ENCODE measurements at regions of chr9 and their contacts with region 1.

Region 1: GRCh38 chr9:70924895-70925547 is 196.4 kb downstream of the TRPM3 start:
- DNase-seq: peak; percentile 47
- H3K4me3 ChIP-seq: no peak overlapping the region
- H3K27ac ChIP-seq: no peak overlapping the region
- H3K27me3 ChIP-seq: no peaks in the 10 kb centered on the region
- CTCF ChIP-seq: peak; percentile 88

Region 2: DNA sequence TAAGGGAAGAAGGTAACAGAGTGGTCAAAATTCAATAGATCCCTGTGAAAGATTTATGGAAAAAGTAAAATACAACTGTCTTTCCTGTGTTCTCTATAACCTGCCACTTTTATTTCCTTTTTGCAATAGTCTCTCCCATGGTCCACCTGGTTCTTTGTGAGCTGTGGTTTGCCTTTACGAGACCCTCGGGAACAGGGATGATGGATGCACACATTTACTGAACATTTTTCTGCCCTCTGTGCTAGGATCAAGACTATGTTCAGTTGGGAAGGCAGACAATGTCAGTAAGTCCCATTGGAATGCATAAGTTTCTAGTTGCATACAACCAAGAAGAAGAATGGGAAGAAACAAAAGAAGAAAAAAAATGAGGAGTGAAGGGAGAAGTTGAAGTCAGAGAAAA is 84.8 kb before region 1 on chr9:
- CTCF ChIA-PET with region 1: no interaction called
- POLR2A ChIA-PET with region 1: no interaction called
- DNase-seq: no peak
- H3K4me3 ChIP-seq: no peak overlapping the region
- H3K27ac ChIP-seq: no peak overlapping the region
- H3K27me3 ChIP-seq: no peaks in the 10 kb centered on the region
- CTCF ChIP-seq: no peak

Region 3: GRCh38 chr9:71001780-71002386 is 76.9 kb after region 1 on chr9:
- CTCF ChIA-PET with region 1: interaction called, 16 read pairs
- POLR2A ChIA-PET with region 1: no interaction called
- DNase-seq: no peak
- H3K4me3 ChIP-seq: no peak overlapping the region
- H3K27ac ChIP-seq: no peak overlapping the region
- H3K27me3 ChIP-seq: no peaks in the 10 kb centered on the region
- CTCF ChIP-seq: peak; percentile 63

Region 4: GRCh38 chr9:71249729-71250317 is 324.8 kb after region 1 on chr9:
- CTCF ChIA-PET with region 1: interaction called, 35 read pairs
- POLR2A ChIA-PET with region 1: no interaction called
- DNase-seq: peak; percentile 30
- H3K4me3 ChIP-seq: no peak overlapping the region
- H3K27ac ChIP-seq: no peak overlapping the region
- H3K27me3 ChIP-seq: no peaks in the 10 kb centered on the region
- CTCF ChIP-seq: peak; percentile 81